Ascending aorta (tissue), 2 donors: ENCODE measurements at regions of chr15 and their contacts with region 1.

Region 1: GRCh38 chr15:57375827-57376695 is at the start of gene CGNL1:
- DNase-seq: peak in 1 of 2 donors; percentile 78
- H3K4me3 ChIP-seq: peak within 1 kb of the TSS; percentile 66 to 84
- H3K27ac ChIP-seq: peak within 1 kb of the TSS; percentile 53 to 62
- H3K4me1 ChIP-seq: peaks cover 0 to 7% of the 10 kb centered on the region in 2 donors
- H3K27me3 ChIP-seq: no peaks in the 10 kb centered on the region
- CTCF ChIP-seq: no peak
- total RNA-seq, gene CGNL1: 3.5 TPM

Region 2: DNA sequence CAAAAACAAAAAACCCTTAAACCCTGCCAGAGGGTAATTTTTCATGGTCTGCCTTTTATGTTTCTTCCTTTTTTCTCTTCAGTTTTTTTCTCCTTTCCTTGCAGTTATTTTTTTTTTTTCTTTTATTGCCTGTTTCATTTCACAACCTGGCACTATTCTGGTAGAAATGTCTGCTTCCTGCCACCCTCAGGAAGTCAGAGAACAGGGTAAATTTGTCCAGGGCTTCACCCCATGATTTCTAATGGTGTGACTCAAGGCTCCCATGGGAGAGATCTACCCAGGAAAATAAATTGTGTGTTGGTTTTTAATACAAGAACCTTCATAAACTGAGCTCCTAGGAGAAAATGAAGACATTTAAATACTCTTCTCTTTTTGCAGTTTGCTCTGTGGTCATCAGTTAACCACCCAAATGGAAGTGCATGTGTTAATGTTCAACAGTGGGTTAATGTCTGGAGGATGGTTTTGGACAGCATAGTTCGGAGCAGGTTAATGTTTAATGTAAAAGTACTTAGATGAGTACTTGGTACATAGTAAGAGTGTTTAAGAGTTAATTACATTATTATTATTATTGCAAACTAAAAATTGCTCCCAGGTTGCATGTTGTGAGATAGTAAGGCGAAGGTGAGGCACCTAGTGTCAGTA is 46.2 kb after region 1 on chr15:
- intact Hi-C with region 1: loop called (anchors 5 kb)
- DNase-seq: peak in 1 of 2 donors; percentile 67
- H3K4me3 ChIP-seq: no peak overlapping the region
- H3K27ac ChIP-seq: peak overlapping the region; percentile 51 to 75
- H3K4me1 ChIP-seq: peaks cover 0 to 13% of the 10 kb centered on the region in 2 donors
- H3K27me3 ChIP-seq: no peaks in the 10 kb centered on the region
- CTCF ChIP-seq: no peak

Region 3: GRCh38 chr15:57436961-57437360 is 60.9 kb after region 1 on chr15:
- intact Hi-C with region 1: loop called (anchors 5 kb)
- DNase-seq: no peak
- H3K4me3 ChIP-seq: no peak overlapping the region
- H3K27ac ChIP-seq: no peak overlapping the region
- H3K4me1 ChIP-seq: peaks cover 0 to 14% of the 10 kb centered on the region in 2 donors
- H3K27me3 ChIP-seq: no peaks in the 10 kb centered on the region
- CTCF ChIP-seq: no peak